Thyroid gland (tissue), 4 donors: ENCODE measurements at regions of chr14 and their contacts with region 1.

Region 1: GRCh38 chr14:23910101-23910875 is 43.3 kb upstream of the DHRS4 start:
- DNase-seq: peak; percentile 53 to 64
- H3K4me3 ChIP-seq: no peak overlapping the region
- H3K27ac ChIP-seq: no peak overlapping the region
- H3K4me1 ChIP-seq: no peaks in the 10 kb centered on the region
- H3K27me3 ChIP-seq: no peaks in the 10 kb centered on the region
- CTCF ChIP-seq: peak; percentile 36 to 86 (median 69)
- POLR2A ChIP-seq: no peak

Region 2: GRCh38 chr14:23406244-23406643 is 504.0 kb before region 1 on chr14:
- intact Hi-C with region 1: no loop called
- DNase-seq: no peak
- H3K4me3 ChIP-seq: no peak overlapping the region
- H3K27ac ChIP-seq: no peak overlapping the region
- H3K4me1 ChIP-seq: no peaks in the 10 kb centered on the region
- H3K27me3 ChIP-seq: no peaks in the 10 kb centered on the region
- CTCF ChIP-seq: no peak
- POLR2A ChIP-seq: no peak

Region 3: DNA sequence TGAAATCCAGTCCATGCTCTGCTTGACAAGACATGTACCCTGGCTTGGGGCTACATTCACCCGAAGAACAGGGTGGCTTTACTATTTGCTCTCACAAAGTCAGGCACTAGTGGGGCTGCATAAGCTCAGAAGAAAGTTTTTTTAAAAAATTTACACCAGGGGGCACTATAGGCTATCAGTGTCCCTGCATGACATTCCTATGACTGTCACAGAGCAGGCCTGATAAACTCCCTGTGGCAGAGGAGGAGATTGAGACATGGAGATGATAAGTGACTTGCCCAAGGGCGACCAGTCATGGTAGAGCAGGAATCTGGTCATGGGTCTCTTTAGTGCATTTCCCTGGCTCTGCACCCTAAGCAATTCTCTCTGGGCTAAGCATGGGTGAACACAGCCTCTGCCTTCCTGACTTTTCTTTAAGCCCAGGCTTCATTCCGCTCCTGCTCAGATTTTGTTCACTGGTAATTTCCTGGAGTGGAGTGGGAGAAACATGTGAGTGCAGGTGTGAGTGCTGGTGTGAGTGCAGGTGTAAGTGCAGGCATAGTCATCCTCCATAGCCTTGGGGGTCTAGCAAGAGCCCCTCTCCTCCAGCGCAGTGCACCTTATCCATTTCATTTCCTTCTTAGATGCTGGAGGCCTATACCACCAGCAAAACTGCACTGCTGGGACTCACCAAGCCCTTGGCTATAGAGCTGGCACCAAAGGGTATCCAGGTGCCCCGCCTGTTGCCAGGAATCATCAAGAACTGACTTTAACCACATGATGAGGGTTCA is 182.5 kb before region 1 on chr14:
- intact Hi-C with region 1: loop called (anchors 5 kb)
- DNase-seq: peak; percentile 10 to 28
- H3K4me3 ChIP-seq: no peak overlapping the region
- H3K27ac ChIP-seq: no peak overlapping the region
- H3K4me1 ChIP-seq: no peaks in the 10 kb centered on the region
- H3K27me3 ChIP-seq: no peaks in the 10 kb centered on the region
- CTCF ChIP-seq: peak in 4 of 6 experiments; percentile 33 to 68 (median 44)
- POLR2A ChIP-seq: no peak